Endothelial cell of umbilical vein (primary cell): ENCODE measurements at regions of chr3 and their contacts with region 1.

Region 1: DNA sequence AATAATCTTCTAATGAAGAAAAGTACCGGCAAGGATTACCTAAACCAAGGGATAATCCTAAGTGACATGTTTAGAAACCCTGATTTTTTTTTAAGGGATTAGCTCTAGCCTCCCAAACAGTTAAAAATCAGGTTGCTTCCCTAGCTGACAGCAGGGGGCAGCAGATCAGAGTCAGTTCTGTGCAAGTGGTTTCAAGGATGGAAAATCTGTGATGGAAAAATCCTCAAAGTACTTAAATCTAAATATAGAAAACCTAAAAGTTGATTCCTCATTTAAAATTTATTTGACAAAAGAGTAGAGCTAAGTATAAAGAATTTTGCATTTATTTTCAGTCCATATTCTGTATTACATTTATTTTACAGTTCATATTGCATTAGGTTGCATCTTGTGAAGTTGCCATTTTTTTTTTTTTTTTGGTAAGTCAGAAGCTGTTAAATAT is 107.6 kb downstream of the PEX5L start:
- DNase-seq: peak; percentile 52
- H3K4me3 ChIP-seq: no peak overlapping the region
- H3K27ac ChIP-seq: no peak overlapping the region
- H3K4me1 ChIP-seq: no peaks in the 10 kb centered on the region
- H3K27me3 ChIP-seq: no peaks in the 10 kb centered on the region
- CTCF ChIP-seq: peak; percentile 59 to 66
- POLR2A ChIP-seq: no peak

Region 2: GRCh38 chr3:179768080-179768479 is 161.0 kb before region 1 on chr3:
- CTCF ChIA-PET with region 1: interaction called, 17 read pairs
- POLR2A ChIA-PET with region 1: no interaction called
- dilution Hi-C with region 1: no loop called
- intact Hi-C with region 1: no loop called
- DNase-seq: peak; percentile 43
- H3K4me3 ChIP-seq: no peak overlapping the region
- H3K27ac ChIP-seq: no peak overlapping the region
- H3K4me1 ChIP-seq: peaks cover 16% of the 10 kb centered on the region
- H3K27me3 ChIP-seq: no peaks in the 10 kb centered on the region
- CTCF ChIP-seq: peak; percentile 37 to 38
- POLR2A ChIP-seq: no peak

Region 3: DNA sequence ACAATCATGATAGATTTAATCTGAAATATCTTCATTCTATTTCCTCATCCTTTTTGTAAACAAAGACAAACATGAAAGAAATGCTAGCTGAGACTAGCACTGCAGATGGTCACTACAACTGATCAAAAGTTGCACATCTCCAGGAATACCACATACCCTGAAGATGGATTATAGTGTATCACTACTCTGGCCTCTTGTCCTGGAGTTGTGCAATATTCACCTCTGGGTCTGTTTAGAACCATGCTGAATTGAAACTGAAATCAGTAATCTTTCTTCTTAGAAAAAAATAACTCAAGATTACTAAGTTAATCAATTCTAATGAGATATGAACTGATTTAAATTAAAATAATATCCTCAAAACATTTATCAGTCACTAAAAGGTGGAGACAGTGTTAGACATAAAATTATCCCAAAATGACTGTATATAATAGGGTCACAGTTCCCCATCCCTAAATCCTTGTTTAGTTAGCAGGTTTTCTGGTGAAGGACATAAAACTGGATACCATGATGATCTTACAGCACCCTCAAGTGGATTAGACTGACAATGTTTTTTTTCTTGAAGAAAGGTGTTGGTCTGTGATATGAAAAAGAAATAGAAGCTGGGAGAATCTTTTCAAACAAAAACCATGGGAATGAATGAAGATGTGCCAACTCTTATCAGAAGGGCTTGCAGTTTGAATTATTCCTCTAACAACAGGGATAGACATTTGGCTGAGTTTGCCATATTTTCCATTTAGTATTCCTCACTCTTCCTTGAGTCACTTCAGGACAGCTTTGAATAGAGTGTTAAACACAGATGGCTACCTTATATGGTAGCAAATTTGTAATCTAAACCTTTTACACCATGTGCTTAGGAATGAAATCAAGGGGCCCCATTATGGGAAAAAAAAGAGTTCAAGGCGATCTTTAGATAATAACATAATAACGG is 665.8 kb after region 1 on chr3:
- CTCF ChIA-PET with region 1: interaction called, 230 read pairs
- POLR2A ChIA-PET with region 1: no interaction called
- dilution Hi-C with region 1: no loop called
- intact Hi-C with region 1: loop called (anchors 1 kb)
- DNase-seq: peak; percentile 55
- H3K4me3 ChIP-seq: no peak overlapping the region
- H3K27ac ChIP-seq: no peak overlapping the region
- H3K4me1 ChIP-seq: no peaks in the 10 kb centered on the region
- H3K27me3 ChIP-seq: peaks cover 0 to 2% of the 10 kb centered on the region in 2 experiments
- CTCF ChIP-seq: peak; percentile 13 to 28
- POLR2A ChIP-seq: no peak

Region 4: GRCh38 chr3:180679178-180680096 is 750.3 kb after region 1 on chr3 and contains the start of gene CCDC39:
- CTCF ChIA-PET with region 1: interaction called, 5 read pairs
- POLR2A ChIA-PET with region 1: no interaction called
- dilution Hi-C with region 1: no loop called
- intact Hi-C with region 1: loop called (anchors 5 kb)
- DNase-seq: peak; percentile 59
- H3K4me3 ChIP-seq: peak within 1 kb of the TSS; percentile 42 to 59 (median 56)
- H3K27ac ChIP-seq: no peak within 1 kb of the TSS
- H3K4me1 ChIP-seq: peaks cover 12% of the 10 kb centered on the region
- H3K27me3 ChIP-seq: peaks cover 9 to 38% of the 10 kb centered on the region in 2 experiments
- CTCF ChIP-seq: no peak
- POLR2A ChIP-seq: no peak
- total RNA-seq, gene CCDC39: not detected in 2 replicates

Region 5: DNA sequence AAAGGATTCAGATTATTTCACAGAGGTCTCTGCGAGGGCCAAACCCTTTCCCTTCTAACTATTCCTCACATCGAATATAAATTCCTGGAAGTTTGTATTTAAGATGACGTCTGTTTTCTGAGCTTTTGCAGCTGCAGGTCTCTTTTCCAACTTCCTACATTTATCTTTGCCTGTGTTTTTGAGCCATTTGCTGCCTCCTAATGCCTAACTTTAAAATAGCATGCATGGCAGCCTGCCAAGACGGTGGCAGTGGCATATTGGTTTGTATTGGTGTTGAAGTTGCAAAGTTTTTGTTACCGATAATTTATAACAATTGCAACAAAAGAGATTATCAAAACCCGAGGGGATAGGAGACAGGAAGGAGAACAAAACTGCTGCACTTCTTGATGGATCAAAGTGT is 1247.5 kb after region 1 on chr3:
- CTCF ChIA-PET with region 1: interaction called, 5 read pairs
- POLR2A ChIA-PET with region 1: no interaction called
- dilution Hi-C with region 1: no loop called
- intact Hi-C with region 1: loop called (anchors 5 kb)
- DNase-seq: peak; percentile 79
- H3K4me3 ChIP-seq: no peak overlapping the region
- H3K27ac ChIP-seq: no peak overlapping the region
- H3K4me1 ChIP-seq: no peaks in the 10 kb centered on the region
- H3K27me3 ChIP-seq: peaks cover 0 to 3% of the 10 kb centered on the region in 2 experiments
- CTCF ChIP-seq: peak; percentile 37 to 53
- POLR2A ChIP-seq: no peak

Region 6: DNA sequence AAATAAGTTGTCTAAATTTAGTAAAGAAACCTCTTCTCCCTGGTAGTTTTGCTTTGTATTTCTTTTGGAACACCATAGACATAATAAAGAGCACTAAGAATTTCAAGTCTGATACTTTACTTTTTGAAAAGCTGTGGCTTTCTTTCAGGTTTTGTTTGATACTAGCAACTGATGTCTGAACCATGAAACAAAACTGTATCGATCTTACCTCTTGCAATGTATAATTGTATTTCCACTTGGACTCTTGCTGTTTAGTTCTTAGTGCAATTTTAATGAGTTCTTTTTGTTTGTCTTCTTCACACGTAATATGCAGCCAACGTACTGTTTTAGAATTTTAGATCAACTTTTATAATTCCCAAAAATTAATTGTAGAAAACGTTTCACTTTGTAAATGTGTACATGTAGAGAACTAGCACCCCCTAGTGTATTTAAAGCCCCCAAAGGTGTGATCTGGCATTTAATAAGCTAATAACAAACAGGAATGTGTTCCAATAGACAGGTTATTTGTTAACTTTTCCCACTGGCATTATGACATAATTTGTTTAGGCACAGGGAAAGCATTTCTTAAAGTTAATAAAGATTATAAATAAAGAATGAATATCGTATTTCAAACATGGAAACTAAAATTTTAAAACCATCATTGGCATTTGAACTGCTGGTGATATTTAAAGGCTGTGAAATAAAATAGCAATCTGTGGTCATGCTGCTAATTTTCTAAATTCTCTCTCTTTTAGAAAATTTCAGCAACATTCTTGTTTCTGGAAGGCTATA is 1349.5 kb after region 1 on chr3:
- CTCF ChIA-PET with region 1: interaction called, 10 read pairs
- POLR2A ChIA-PET with region 1: no interaction called
- dilution Hi-C with region 1: no loop called
- intact Hi-C with region 1: no loop called
- DNase-seq: peak; percentile 6
- H3K4me3 ChIP-seq: no peak overlapping the region
- H3K27ac ChIP-seq: no peak overlapping the region
- H3K4me1 ChIP-seq: no peaks in the 10 kb centered on the region
- H3K27me3 ChIP-seq: peaks cover 0 to 4% of the 10 kb centered on the region in 2 experiments
- CTCF ChIP-seq: peak in 1 of 2 donors; percentile 7
- POLR2A ChIP-seq: no peak